ENCODE measurements at regions of chr7 and their contacts with region 1.

Region 1: GRCh38 chr7:32164346-32164957 is 94.2 kb upstream of the PDE1C start:
- DNase-seq: no peak
- H3K4me3 ChIP-seq: no peak overlapping the region
- CTCF ChIP-seq: no peak
- POLR2A ChIP-seq: no peak

Region 2: DNA sequence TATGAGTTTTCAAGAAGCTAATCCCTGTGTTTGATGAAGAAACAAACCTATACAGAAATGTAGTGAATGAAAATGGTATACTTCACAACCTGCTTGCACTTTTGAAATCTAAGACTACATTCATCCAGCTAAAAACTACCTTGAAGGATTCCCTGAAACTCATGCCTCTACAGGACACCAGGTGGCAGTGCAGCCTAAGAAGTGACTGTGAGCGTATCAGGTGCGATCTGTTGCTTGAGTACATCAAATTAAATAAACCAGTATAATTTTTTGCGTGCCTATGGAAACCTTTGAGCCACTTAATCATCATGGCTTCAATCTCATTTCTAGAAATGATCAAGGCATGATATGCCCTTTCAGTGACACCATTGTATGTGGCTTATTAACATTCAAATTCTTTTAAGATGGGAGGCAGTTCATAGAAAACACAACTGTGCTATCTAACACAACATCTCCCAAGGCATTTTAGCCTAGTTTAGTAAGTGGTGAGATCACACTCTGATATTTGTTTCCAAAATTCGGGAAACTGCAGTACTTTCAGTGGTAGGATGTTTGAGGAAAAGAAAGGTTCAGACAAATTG is 420.1 kb before region 1 on chr7:
- intact Hi-C with region 1: loop called (anchors 10 kb)
- DNase-seq: peak in 1 of 2 donors; percentile 42
- H3K4me3 ChIP-seq: no peak overlapping the region
- CTCF ChIP-seq: no peak
- POLR2A ChIP-seq: no peak

Measured in lower leg skin (tissue), 4 donors.